Body of pancreas (tissue), 4 donors: ENCODE measurements at regions of chr4 and their contacts with region 1.

Region 1: DNA sequence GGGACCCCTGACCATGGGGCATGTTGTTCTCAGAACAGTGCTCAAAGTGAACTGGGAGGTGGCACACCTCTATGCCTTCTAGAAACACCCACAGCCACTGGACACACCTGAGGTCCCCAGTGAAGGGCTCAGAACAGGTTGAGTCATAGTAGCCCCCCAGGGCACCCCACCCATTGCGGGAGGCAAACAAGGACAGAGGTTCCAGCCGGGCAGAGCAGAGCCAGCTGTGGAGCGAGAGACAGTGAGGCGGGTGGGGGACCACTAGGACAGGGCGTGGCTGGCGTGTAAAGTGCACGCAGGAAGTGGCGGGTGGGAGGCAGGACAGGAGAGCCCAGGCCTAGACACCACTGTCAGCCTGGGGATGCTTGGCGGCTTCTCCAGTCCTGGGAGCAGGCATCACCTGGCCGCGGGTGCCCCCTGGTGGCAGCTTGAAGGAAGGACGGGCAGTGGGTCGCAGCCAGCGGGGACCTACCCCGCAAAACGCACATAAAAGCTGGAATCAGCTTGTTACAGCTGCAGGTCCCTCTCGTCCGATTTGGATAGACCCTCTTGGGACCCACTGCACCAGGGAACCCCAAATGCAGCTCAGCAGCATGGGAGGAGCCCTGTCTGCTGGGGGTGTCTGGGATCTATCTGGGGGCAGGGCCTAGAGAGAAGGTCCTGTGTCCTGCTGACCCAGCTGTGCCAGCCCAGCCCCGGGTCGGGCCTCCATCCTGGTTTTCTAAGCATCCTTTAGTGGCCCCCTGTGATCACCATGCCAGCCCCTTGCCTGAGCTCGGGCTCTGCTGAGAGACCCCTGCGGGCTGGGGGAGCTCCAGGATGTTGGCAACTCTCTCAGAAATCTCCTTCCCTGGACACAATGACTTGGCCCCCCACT is 57.6 kb downstream of the WFS1 start:
- DNase-seq: peak; percentile 77 to 82 (median 80)
- ATAC-seq: peak; percentile 80
- H3K4me3 ChIP-seq: no peak overlapping the region
- H3K27ac ChIP-seq: no peak overlapping the region
- H3K4me1 ChIP-seq: no peaks in the 10 kb centered on the region
- H3K27me3 ChIP-seq: peaks cover 0 to under 1% of the 10 kb centered on the region in 2 donors
- CTCF ChIP-seq: peak; percentile 86 to 96 (median 91)
- POLR2A ChIP-seq: no peak

Region 2: DNA sequence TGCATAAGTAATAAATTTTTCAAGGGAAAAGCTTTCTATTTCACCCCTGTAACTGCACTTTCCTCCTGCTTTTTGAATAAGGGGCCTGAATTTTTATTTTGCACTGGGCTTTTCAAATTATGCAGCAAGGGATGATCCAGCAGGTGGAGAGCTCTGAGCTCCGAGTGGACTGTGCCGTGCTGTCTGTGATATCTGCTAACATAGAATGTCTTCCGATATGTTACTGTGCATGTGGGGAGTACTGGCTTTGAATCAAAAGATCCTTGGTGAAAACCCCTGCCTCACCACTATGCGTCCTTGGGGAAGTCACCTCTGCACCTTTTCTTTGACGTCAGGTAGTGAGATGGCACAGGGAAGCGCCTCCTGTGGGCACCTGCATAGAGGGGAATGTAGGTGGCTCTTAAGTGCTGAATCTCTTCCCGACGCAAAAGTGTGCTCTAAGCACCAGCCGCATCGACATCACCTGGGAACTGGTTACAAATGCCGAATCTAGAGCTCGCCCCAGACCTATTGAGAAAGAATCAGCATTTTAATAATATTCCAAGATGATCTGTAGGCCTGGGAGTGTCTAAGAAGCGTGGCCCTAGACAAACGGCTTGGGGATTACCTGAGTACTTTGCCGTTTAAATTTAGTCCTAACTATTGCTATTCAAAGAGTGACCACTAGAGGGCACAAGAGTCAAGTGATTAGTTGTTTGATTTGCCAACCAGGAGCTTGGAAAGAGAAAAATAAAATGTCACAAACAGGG is 76.9 kb before region 1 on chr4:
- intact Hi-C with region 1: loop called (anchors 5 kb)
- DNase-seq: peak in 1 of 4 donors; percentile 47
- ATAC-seq: peak; percentile 71
- H3K4me3 ChIP-seq: no peak overlapping the region
- H3K27ac ChIP-seq: no peak overlapping the region
- H3K4me1 ChIP-seq: peaks cover 5% of the 10 kb centered on the region
- H3K27me3 ChIP-seq: peaks cover 0 to 7% of the 10 kb centered on the region in 2 donors
- CTCF ChIP-seq: peak; percentile 60 to 91 (median 79)
- POLR2A ChIP-seq: no peak

Region 3: DNA sequence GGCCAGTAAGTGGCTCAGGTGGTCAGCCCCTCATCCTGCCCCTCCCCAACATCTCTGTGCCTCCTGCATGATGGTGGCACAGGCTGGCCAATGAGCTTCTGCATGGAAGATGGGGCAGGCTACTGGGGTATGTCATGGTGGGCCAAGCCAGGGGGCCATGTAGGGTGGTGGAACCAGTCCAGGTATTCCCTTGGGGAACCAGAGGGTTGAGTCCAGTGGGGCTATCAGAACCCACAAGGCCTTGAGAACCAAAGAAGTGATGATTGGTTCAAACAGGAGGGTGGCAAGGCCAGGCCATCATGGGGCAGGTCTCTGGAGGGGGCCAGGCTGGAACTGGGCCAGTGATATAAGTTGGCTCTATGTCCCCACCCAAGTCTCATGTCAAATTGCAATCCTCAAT is 164.0 kb after region 1 on chr4:
- intact Hi-C with region 1: no loop called
- DNase-seq: no peak
- ATAC-seq: no peak
- H3K4me3 ChIP-seq: no peak overlapping the region
- H3K27ac ChIP-seq: no peak overlapping the region
- H3K4me1 ChIP-seq: peaks cover 10% of the 10 kb centered on the region
- H3K27me3 ChIP-seq: no peaks in the 10 kb centered on the region
- CTCF ChIP-seq: no peak
- POLR2A ChIP-seq: no peak